ENCODE measurements at regions of chrX and their contacts with region 1.

Region 1: DNA sequence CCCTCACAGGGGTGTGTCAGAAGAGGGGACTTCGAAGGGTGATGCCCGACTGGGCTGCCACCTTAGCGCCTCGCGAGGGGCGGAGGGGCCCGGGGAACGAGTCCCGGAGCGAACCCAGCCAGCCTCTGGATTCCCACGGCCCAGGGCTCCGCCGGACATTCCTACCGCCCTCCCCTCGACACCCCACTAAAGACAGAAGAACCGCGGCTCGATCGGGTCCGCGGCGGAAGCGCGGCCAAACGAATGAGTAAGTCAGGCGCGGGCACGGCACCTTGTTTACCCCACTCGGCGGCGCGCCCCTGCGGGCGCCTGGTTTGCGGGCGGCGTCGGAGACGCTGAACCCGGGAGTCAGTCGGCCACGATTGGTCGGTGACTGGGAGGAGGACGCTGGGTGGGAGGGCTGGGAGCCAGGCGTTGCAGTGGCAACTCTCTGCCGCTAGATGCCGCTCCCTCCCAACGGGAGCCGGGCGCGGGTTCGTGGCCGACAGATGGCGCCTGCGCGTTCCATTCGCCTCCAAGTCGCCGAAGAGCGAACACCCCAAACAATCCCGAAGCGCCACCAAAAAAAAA is 1.4 kb upstream of the STAG2 start:
- DNase-seq: peak; percentile 83 to 89
- ATAC-seq: peak; percentile 56 to 64
- H3K4me3 ChIP-seq: peak overlapping the region; percentile 78 to 85 (median 81)
- H3K27ac ChIP-seq: peak overlapping the region; percentile 95 to 99 (median 98)
- H3K4me1 ChIP-seq: peaks cover 2 to 8% of the 10 kb centered on the region in 2 donors
- H3K27me3 ChIP-seq: no peaks in the 10 kb centered on the region
- CTCF ChIP-seq: peak; percentile 82 to 92 (median 90)
- POLR2A ChIP-seq: peak; percentile 86 to 91

Region 2: DNA sequence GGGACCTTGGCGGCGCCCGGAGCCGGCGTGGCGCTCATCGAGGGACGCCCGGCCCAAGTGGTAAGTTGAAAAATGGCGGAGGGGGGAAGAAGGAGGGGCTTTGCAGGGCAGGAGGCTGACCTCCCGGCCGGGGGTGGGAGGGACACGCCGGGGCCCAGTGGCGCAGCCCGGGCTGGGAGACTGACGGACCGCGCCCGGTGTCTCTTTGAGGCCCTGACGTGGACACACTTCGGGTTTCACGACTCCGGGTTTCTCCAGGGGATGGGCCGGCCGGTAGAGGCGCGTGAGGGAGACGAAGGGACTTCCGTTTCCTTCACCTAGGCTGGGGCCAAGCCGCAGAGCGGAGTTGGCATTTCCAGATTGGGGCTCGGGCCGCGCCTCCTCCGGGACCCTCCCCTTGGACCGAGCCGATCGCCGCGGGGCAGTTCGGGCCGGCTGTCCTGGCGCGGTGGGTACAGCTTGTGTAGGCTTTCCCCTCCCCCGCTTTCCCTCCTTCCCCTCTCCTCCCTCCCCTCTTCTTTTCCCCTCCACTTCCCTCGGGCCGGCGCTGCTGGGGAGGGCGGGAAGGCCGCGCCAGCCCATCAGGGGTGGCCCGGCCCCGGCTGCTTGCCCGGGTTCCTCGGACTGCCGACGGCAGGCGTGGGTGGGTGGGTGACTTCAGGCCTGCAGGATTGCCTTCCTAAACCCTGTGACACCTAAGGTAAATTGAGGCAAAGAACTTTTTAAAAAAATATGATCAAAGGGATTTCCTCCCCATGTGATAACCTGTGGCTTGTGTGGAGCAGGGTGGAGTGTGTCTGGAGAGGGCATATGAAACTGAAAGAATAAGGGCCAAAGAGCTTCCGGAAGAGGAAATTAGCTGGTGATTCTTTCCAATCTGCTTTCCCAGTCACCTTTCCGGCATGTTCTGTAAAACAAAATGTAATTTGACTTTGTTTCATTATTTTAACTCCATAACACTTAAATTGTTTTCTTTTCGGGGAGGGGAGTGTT is 100.0 kb before region 1 on chrX and contains the start of gene XIAP:
- in situ Hi-C with region 1: no loop called
- intact Hi-C with region 1: loop called (anchors 1 kb)
- DNase-seq: peak; percentile 75 to 87
- ATAC-seq: peak; percentile 83 to 86
- H3K4me3 ChIP-seq: peak within 1 kb of the TSS; percentile 71 to 85 (median 78)
- H3K27ac ChIP-seq: peak within 1 kb of the TSS; percentile 93 to 98 (median 96)
- H3K4me1 ChIP-seq: peaks cover 0 to 5% of the 10 kb centered on the region in 2 donors
- H3K27me3 ChIP-seq: no peaks in the 10 kb centered on the region
- CTCF ChIP-seq: no peak
- POLR2A ChIP-seq: peak; percentile 62 to 70
- total RNA-seq, gene XIAP: 14.4 to 31.1 (median 26.8) TPM

Region 3: GRCh38 chrX:123976706-123977316 is 16.7 kb after region 1 on chrX:
- in situ Hi-C with region 1: no loop called
- intact Hi-C with region 1: loop called (anchors 1 kb)
- DNase-seq: no peak
- ATAC-seq: peak; percentile 74 to 77
- H3K4me3 ChIP-seq: no peak overlapping the region
- H3K27ac ChIP-seq: peak overlapping the region; percentile 34 to 64 (median 51)
- H3K4me1 ChIP-seq: peaks cover 27 to 41% of the 10 kb centered on the region in 2 donors
- H3K27me3 ChIP-seq: no peaks in the 10 kb centered on the region
- CTCF ChIP-seq: peak in 4 of 5 experiments; percentile 5 to 36 (median 28)
- POLR2A ChIP-seq: no peak

Region 4: GRCh38 chrX:124035657-124036056 is 75.5 kb after region 1 on chrX:
- in situ Hi-C with region 1: no loop called
- intact Hi-C with region 1: loop called (anchors 5 kb)
- DNase-seq: no peak
- ATAC-seq: no peak
- H3K4me3 ChIP-seq: no peak overlapping the region
- H3K27ac ChIP-seq: peak overlapping the region in 1 of 4 donors; percentile 9
- H3K4me1 ChIP-seq: peaks cover 0 to 7% of the 10 kb centered on the region in 2 donors
- H3K27me3 ChIP-seq: no peaks in the 10 kb centered on the region
- CTCF ChIP-seq: no peak
- POLR2A ChIP-seq: no peak

Region 5: DNA sequence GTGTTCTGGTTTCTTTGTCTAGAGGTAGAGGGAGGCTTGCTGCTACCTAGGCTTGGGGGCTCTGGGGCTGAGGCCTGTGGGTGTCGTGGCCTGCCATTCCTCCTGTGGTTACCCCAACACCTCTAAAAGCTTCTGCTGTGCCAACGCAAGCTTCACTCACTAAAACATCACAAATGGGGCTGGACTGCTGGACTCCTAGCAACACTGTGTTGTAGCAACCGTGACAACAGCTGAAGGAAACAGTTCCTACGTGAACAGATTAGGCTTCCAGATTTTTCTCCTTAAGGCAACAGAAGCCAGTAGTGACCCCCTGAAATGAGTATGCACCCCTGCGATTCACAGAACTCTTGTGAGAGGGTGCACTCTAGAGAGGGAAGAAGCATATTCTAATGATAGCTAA is 234.1 kb after region 1 on chrX:
- in situ Hi-C with region 1: no loop called
- intact Hi-C with region 1: loop called (anchors 10 kb)
- DNase-seq: peak in 1 of 2 donors; percentile 44
- ATAC-seq: peak; percentile 67 to 85
- H3K4me3 ChIP-seq: peak overlapping the region in 2 of 4 donors; percentile 13 to 38
- H3K27ac ChIP-seq: peak overlapping the region; percentile 64 to 86 (median 79)
- H3K4me1 ChIP-seq: peaks cover 6 to 29% of the 10 kb centered on the region in 2 donors
- H3K27me3 ChIP-seq: no peaks in the 10 kb centered on the region
- CTCF ChIP-seq: no peak
- POLR2A ChIP-seq: no peak